Head of caudate nucleus (tissue), 42 donors: ENCODE measurements at regions of chr11 and their contacts with region 1.

Region 1: GRCh38 chr11:112837162-112837826 is 123.9 kb upstream of the NCAM1 start:
- DNase-seq: peak in 41 of 42 donors; percentile 31 to 87 (median 72)

Region 2: DNA sequence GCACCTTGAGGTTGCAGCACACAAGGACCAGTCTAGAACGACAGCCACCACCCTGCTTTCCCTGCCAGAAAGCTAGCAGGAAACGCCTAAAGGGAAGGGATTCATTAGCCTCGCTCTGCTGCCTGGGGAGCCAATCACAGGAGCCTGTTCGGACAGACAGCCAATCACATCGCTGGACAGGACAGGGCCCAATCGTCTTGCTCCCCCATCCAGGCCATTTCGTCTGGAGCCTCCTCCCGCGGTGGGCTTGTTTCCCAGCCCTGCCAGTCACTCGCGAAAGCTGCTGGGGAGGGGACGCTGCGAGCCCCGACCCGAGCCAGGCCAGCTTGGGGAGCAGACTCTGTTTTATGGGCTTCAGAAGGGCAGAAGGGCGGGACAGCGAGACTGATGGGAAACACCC is 44.2 kb after region 1 on chr11:
- intact Hi-C with region 1: no loop called
- DNase-seq: peak; percentile 88 to 98 (median 96)

Region 3: DNA sequence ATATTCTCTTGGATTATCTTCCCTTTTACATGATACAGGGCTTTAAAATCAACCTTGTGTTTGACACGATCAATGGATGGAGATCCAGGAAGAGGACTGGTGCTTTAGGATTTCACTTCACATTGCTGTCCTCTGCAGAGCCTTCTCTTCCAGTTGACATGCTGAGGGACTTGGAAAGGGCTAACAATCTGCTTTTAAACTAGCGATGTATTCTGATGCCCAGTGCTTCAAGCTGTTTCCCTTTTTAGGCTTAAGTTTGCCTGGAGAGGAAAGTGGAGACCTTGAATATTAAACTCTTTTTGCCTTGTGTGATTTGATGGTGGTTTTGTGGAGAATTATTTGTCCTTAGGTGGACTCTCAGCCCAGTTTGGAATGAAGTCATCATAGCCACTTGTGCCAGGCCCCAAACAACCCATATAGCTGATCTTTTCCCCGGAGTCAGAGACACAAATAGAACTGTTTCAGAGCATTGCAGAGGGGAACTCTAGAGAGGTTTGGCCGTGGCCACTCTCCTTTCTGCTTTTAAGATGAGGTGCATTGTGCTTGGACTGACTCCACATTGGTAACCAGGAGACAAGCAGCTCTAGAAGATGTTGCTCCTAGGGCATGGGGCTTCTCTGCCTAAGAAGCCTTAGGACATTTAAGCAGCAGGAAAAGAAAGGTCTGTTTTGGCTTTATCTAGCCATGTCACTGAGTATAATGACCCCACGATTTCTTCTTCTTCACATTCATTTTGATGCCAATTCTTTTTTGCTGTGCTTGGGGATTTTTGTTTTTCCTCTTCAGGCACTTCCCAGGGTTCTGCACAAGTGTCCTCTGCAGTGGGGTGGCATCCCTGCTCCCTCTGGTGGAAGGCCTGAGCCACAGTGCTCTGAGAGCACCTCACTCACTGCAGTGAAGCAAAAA is 276.8 kb after region 1 on chr11:
- intact Hi-C with region 1: loop called (anchors 10 kb)
- DNase-seq: peak; percentile 60 to 95 (median 83)